ENCODE measurements at regions of chr3 and their contacts with region 1.

Region 1: DNA sequence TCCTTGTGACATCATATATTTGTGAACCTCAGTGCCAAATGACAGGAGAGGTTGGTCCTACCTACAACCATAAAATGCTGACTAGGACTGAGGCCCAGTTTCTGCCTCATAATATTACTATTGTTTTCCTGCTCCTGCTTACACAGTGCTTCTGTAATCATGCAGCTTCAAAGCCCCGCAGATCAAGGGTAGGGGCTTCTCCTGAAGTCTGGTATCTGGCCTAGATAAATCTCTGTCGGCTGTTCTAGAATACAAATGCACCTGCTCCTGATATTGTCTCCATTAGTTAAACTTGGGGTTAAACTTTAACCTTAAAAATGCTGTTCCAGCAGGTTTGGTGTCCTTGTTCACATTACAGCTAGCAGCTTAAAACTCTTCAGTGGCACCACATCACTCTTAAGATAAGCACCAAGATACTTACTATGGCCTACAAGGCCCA is 552.4 kb downstream of the TUSC7 start:
- DNase-seq: no peak
- H3K4me3 ChIP-seq: no peak overlapping the region
- H3K27ac ChIP-seq: no peak overlapping the region
- H3K4me1 ChIP-seq: no peaks in the 10 kb centered on the region
- H3K27me3 ChIP-seq: no peaks in the 10 kb centered on the region
- CTCF ChIP-seq: no peak

Region 2: GRCh38 chr3:117226932-117227331 is 35.1 kb before region 1 on chr3:
- CTCF ChIA-PET with region 1: no interaction called
- POLR2A ChIA-PET with region 1: no interaction called
- intact Hi-C with region 1: loop called (anchors 1 kb)
- DNase-seq: no peak
- H3K4me3 ChIP-seq: no peak overlapping the region
- H3K27ac ChIP-seq: no peak overlapping the region
- H3K4me1 ChIP-seq: no peaks in the 10 kb centered on the region
- H3K27me3 ChIP-seq: no peaks in the 10 kb centered on the region
- CTCF ChIP-seq: no peak

Measured in PC-9 (cell line).